H1 (cell line): ENCODE measurements at regions of chr1 and their contacts with region 1.

Region 1: GRCh38 chr1:28248283-28249012 is 10.9 kb upstream of the SESN2 start:
- DNase-seq: peak in 1 of 2 experiments; percentile 88
- H3K4me3 ChIP-seq: peak overlapping the region in 2 of 4 experiments; percentile 23 to 31; a peak in 3 of 8 replicates
- H3K27ac ChIP-seq: peak overlapping the region; percentile 18; the same call in 1 of the 2 replicates
- H3K4me1 ChIP-seq: peaks cover 6 to 19% (median 10%) of the 10 kb centered on the region in 4 experiments; a peak in 6 of 7 replicates
- H3K27me3 ChIP-seq: no peaks in the 10 kb centered on the region
- CTCF ChIP-seq: peak; percentile 69 to 91 (median 71)
- EP300 ChIP-seq: no peak
- POLR2A ChIP-seq: peak in 1 of 2 experiments; percentile 22; a peak in 1 of 3 replicates
- RAD21 ChIP-seq: peak; percentile 82 to 84

Region 2: DNA sequence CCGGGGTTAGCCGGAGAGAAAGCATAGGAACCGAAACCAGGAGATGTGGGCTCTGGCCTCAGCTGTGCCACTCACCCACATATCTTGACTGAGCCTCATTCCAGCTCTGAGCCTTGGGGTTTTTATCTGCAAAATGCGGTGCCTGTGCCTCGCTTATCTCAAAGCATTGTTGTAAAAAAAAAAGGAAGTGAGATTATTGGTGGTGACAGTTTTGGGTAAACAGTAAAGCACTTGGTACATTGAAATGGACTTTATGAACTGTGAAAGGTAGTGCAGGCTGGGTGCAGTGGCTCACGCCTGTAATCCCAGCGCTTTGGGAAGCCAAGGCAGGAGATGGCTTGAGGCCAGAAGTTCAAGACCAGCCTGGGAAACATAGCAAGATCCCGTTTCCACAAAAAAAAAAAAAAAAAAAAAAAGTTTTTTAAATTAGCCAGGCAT is 75.7 kb before region 1 on chr1:
- CTCF ChIA-PET with region 1: no interaction called
- POLR2A ChIA-PET with region 1: no interaction called
- DNase-seq: no peak
- H3K4me3 ChIP-seq: no peak overlapping the region
- H3K27ac ChIP-seq: no peak overlapping the region
- H3K4me1 ChIP-seq: peaks cover 0 to 3% (median 0%) of the 10 kb centered on the region in 4 experiments; a peak in 1 of 7 replicates
- H3K27me3 ChIP-seq: no peaks in the 10 kb centered on the region
- CTCF ChIP-seq: no peak
- EP300 ChIP-seq: no peak
- POLR2A ChIP-seq: no peak
- RAD21 ChIP-seq: no peak

Region 3: DNA sequence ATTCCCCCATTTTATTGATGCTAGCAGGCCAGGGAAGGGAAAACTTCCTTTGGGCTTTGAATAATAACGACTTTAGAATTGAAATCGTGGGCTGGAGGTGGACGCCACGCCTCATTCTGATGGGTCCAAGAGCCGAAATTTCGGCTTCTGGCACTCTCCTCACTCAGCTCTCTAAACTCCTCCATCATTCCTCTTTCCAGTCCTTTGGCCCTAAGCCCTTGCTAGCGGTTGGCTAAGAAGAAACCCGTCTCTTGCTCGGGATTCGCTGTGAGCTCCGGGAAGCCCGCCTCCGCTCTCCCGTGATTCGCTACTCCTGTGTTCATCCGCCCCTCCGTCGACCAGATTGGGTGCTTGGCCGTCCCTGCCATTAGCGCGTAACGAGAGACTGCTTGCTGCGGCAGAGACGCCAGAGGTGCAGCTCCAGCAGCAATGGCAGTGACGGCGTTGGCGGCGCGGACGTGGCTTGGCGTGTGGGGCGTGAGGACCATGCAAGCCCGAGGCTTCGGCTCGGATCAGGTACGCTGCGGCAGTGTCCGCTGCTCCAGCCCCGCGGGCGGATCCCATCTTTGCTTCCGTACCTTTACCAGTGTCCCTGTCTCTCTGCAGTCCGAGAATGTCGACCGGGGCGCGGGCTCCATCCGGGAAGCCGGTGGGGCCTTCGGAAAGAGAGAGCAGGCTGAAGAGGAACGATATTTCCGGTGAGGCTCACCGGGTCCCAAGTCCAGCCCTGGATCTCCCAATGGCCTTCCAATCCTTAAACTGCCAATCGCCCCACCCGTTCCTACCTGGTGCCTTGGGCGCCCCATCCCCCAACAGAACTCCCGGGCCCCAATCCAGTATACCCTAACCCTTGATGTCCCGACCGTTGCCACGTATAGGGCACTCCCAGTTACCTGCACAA is 12.4 kb before region 1 on chr1 and contains the start of gene ATP5IF1:
- CTCF ChIA-PET with region 1: interaction called, 21 read pairs
- POLR2A ChIA-PET with region 1: interaction called, 116 read pairs
- DNase-seq: peak; percentile 88 to 90
- H3K4me3 ChIP-seq: peak within 1 kb of the TSS; percentile 94 to 99 (median 96)
- H3K27ac ChIP-seq: peak within 1 kb of the TSS; percentile 84
- H3K4me1 ChIP-seq: peaks cover 0 to 4% (median 4%) of the 10 kb centered on the region in 4 experiments; a peak in 4 of 7 replicates
- H3K27me3 ChIP-seq: no peaks in the 10 kb centered on the region
- CTCF ChIP-seq: no peak
- EP300 ChIP-seq: no peak
- POLR2A ChIP-seq: peak; percentile 86 to 94
- RAD21 ChIP-seq: no peak
- total RNA-seq, gene ATP5IF1: 198 and 202 TPM in 2 replicates

Region 4: GRCh38 chr1:28273216-28273860 is 24.9 kb after region 1 on chr1:
- CTCF ChIA-PET with region 1: interaction called, 15 read pairs
- POLR2A ChIA-PET with region 1: interaction called, 296 read pairs
- DNase-seq: no peak
- H3K4me3 ChIP-seq: no peak overlapping the region
- H3K27ac ChIP-seq: no peak overlapping the region
- H3K4me1 ChIP-seq: no peaks in the 10 kb centered on the region
- H3K27me3 ChIP-seq: no peaks in the 10 kb centered on the region
- CTCF ChIP-seq: no peak
- EP300 ChIP-seq: no peak
- POLR2A ChIP-seq: no peak
- RAD21 ChIP-seq: no peak

Region 5: DNA sequence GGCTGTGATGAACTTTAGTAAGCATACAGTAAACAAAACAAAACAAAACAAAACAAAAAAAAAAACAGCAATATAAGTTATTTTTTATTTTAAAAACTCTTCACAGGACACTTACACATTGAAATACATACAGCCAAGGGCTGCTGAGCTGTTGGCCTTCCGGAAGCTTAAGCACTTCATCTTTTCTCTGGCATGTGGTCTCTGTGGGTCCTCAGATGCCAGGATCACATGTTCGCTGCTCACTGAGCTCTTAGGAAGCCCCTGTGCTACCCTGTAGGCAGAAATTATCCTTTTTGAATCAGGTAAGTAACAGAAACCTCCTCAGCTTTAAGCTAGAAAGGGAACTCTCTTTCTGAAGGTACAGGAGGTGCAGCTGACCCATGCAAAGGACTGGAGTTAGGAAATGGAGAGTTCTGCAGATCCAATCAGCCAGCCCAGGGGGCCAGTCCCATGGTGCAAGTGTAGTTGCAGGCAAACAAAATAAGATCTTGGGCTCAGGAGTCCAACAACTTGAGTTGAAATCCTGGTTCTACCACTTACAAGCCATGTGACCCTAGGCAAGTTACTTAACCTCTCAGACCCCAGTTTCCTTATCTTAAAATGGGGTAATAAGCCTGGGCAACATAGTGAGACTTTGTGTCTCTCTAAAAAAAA is 58.0 kb after region 1 on chr1:
- CTCF ChIA-PET with region 1: interaction called, 14 read pairs
- POLR2A ChIA-PET with region 1: no interaction called
- DNase-seq: no peak
- H3K4me3 ChIP-seq: no peak overlapping the region
- H3K27ac ChIP-seq: no peak overlapping the region
- H3K4me1 ChIP-seq: no peaks in the 10 kb centered on the region
- H3K27me3 ChIP-seq: no peaks in the 10 kb centered on the region
- CTCF ChIP-seq: no peak
- EP300 ChIP-seq: no peak
- POLR2A ChIP-seq: no peak
- RAD21 ChIP-seq: no peak

Region 6: DNA sequence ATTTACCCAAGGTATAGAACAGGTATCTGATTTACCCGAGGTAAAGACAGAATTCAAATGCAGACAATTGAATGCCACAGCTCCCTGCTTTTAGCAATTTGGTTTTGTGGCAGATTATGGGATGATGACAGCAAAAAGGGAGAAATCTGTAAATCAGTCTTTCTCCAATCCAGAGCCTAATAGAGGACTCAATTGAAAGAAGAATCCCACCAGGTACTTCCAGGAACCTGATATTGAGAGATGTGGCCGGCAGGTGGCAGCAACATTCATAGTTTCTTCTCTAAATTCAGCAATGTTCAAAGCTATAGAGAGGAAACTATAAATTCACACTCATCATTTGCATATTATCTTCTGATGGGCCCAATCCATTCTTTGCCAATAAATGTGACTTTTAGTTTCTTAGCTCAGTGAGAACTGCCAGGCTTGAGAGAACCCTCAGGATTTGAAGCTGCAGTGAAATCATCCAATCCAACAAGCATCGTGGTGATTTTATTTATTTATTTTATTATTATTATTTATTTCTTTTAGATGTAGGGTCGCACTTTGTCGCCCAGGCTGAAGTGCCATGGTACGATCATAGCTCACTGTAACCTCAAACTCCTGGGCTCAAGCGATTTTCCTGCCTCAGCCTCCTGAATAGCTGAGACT is 111.3 kb after region 1 on chr1:
- CTCF ChIA-PET with region 1: interaction called, 13 read pairs
- POLR2A ChIA-PET with region 1: no interaction called
- DNase-seq: peak in 1 of 2 experiments; percentile 76
- H3K4me3 ChIP-seq: no peak overlapping the region
- H3K27ac ChIP-seq: no peak overlapping the region
- H3K4me1 ChIP-seq: peaks cover 0 to 3% (median 0%) of the 10 kb centered on the region in 4 experiments; a peak in 1 of 7 replicates
- H3K27me3 ChIP-seq: no peaks in the 10 kb centered on the region
- CTCF ChIP-seq: peak in 2 of 3 experiments; percentile 54 to 66; a peak in 2 of 4 replicates
- EP300 ChIP-seq: no peak
- POLR2A ChIP-seq: no peak
- RAD21 ChIP-seq: peak; percentile 64 to 71

Region 7: DNA sequence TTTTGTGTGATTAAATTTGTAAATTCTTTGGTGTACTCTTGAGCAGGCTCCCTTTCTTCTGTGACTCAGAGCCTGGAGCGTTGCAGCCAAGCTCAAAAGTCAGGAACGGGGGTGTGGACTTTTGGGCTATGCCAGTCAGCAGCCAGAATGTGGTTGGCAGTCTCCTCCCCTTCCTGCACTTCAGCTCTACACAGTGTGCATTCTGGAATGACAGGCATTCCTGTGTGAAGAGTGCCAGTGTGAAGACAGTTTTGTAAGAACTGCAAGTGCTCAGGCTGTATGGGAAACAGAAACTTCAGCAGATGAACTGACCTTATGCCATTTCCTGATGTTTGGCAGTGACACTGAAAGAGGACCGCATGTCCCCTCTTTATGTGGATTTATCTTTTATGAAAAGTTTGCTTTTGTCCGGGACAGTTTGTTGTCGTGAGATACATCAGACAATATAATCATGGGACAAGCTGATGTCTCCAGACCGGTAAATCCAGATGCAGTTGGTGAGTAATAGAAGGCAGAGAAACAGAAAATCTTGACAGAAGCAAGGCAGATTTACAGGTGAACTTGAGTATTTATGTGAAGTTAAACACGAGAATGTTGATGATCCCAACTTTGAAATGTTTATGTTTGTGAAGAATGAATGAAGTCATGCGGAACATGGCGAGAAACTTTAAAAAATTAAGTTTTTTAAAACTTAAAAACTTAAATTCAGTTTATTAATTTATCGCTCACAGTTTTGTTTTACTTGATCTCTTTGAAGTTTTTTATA is 189.7 kb after region 1 on chr1:
- CTCF ChIA-PET with region 1: no interaction called
- POLR2A ChIA-PET with region 1: no interaction called
- DNase-seq: peak in 1 of 2 experiments; percentile 7
- H3K4me3 ChIP-seq: no peak overlapping the region
- H3K27ac ChIP-seq: no peak overlapping the region
- H3K4me1 ChIP-seq: peaks cover 0 to 9% (median 1%) of the 10 kb centered on the region in 4 experiments; a peak in 4 of 7 replicates
- H3K27me3 ChIP-seq: no peaks in the 10 kb centered on the region
- CTCF ChIP-seq: no peak
- EP300 ChIP-seq: no peak
- POLR2A ChIP-seq: no peak
- RAD21 ChIP-seq: no peak

Region 8: DNA sequence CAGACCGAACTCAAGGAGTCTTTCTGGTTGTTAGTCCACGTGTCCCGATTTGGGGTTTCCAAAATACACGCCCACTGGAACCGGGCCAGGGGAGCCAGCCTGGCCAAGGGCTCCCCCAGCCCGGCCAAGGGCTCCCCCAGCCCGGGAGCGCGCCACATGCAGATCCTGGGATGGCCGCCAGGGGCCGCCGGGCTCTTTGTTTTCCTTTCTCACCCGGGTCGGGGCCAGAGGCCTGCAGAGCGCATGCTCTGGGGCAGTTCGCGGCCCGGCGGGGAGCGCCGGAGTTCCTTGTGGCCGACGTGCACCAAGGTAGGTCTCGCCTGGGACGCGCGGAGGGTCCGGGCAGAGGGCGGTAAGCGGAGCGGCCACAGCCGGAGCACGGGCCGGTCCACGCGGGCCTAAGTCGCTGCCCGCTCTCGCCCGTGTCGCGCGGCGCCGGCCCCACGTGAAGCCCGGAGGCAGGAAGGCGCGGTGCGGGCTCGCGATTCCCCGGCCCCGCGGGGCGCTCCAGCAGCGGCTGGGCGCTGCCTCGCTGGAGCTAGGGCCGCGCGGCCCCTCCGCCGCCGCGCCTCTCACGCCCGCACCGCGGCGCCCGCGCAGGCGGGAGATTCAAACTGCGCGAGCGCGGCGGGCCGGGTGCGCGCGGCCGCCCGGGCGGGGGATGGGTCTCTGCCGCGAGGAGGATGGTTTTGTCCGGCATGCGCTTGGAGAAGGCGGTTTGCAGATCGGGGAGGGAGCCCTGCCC is 269.7 kb after region 1 on chr1:
- CTCF ChIA-PET with region 1: interaction called, 6 read pairs
- POLR2A ChIA-PET with region 1: interaction called, 98 read pairs
- DNase-seq: peak in 1 of 2 experiments; percentile 98
- H3K4me3 ChIP-seq: peak overlapping the region; percentile 66 to 83 (median 78)
- H3K27ac ChIP-seq: peak overlapping the region; percentile 95
- H3K4me1 ChIP-seq: peaks cover 7 to 16% (median 11%) of the 10 kb centered on the region in 4 experiments
- H3K27me3 ChIP-seq: no peaks in the 10 kb centered on the region
- CTCF ChIP-seq: peak; percentile 73 to 91 (median 88)
- EP300 ChIP-seq: peak in 1 of 2 experiments; percentile 43; a peak in 1 of 3 replicates
- POLR2A ChIP-seq: peak; percentile 82 to 84; a peak in 2 of 3 replicates
- RAD21 ChIP-seq: peak; percentile 75 to 87